Transverse colon (tissue), 4 donors: ENCODE measurements at regions of chr19 and their contacts with region 1.

Region 1: DNA sequence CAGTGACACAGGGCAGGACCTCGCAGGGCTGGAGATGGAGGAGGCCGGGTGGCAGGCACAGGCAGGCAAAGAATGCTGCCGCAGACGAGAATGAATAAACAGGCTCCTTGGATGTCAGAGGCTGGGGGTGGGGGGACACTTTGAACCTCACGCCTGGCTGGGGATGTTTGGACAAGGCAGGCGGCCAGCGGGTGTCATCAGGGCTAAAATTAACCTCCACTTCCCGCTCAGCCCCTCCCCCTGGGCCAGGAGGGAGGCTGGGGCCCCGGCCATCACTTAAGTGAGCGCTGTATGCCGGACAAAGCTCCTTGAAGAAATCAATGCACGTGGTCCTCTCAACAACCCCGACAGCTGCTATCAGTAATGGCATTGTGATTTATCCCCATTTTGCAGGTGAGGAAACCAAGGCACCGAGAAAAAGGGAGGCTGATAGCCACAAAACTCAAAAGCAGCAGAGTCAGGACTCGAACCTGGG is 10.3 kb upstream of the FUT5 start:
- DNase-seq: peak; percentile 74
- H3K4me3 ChIP-seq: no peak overlapping the region
- H3K27ac ChIP-seq: peak overlapping the region; percentile 63 to 84 (median 75)
- H3K4me1 ChIP-seq: peaks cover 12 to 15% (median 13%) of the 10 kb centered on the region in 4 donors
- H3K27me3 ChIP-seq: peaks cover 45% of the 10 kb centered on the region
- CTCF ChIP-seq: no peak
- EP300 ChIP-seq: peak; percentile 62
- POLR2A ChIP-seq: no peak

Region 2: GRCh38 chr19:5814852-5815246 is 65.8 kb before region 1 on chr19:
- in situ Hi-C with region 1: loop called in 1 of 4 experiments (anchors 10 kb)
- intact Hi-C with region 1: no loop called
- DNase-seq: no peak
- H3K4me3 ChIP-seq: no peak overlapping the region
- H3K27ac ChIP-seq: no peak overlapping the region
- H3K4me1 ChIP-seq: peaks cover 0 to 7% (median 0%) of the 10 kb centered on the region in 4 donors
- H3K27me3 ChIP-seq: no peaks in the 10 kb centered on the region
- CTCF ChIP-seq: no peak
- EP300 ChIP-seq: no peak
- POLR2A ChIP-seq: no peak

Region 3: GRCh38 chr19:6185835-6186834 is 305.5 kb after region 1 on chr19:
- in situ Hi-C with region 1: no loop called
- intact Hi-C with region 1: no loop called
- DNase-seq: no peak
- H3K4me3 ChIP-seq: no peak overlapping the region
- H3K27ac ChIP-seq: no peak overlapping the region
- H3K4me1 ChIP-seq: no peaks in the 10 kb centered on the region
- H3K27me3 ChIP-seq: peaks cover 27% of the 10 kb centered on the region
- CTCF ChIP-seq: no peak
- EP300 ChIP-seq: no peak
- POLR2A ChIP-seq: no peak